ENCODE measurements at regions of chr20 and their contacts with region 1.

Region 1: DNA sequence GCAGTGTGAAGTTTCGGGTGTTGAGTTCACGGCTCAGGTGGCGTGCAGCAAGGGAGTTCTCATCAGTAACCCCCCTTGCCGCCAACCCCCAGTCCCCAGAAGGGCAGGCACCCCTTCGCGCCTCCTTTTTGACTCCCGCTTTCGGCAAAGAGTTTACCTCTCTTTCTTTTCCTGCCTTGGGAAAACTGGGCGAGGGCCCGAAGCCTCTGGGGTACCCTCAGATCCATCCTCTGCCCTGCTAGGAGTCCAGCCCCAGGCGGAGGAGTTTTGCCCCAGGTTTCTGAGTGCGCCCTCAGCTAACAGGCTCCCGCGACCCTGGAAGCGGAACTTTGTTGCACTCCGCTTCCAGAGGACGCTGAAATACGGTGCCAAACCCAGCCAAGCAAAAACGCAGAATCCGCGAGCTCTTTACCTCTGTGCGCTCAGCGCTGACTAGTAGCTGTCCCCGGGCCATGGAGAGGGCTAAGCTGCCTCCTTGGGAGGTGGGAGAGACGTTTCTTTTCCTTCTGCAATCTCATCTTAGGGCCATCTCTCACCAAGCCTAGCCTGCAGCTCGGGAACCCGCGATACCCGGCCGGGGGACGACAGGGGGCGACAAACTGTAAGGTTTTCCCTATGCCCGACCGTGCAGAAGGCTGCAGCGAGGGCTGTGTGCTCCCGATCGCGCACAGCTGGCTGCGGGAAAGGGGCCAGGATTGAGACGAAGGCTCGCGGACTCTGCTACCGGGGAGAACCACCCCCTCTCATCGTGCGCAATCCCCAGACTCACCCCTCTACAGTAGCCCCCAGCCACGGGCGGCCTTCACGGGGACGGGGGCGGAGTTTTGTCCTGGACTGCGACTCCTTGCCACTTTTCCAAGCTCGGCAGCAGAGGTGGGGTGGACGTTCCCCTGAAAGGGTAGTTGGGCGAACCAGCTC is 2.7 kb upstream of the PAX1 start:
- DNase-seq: peak in 1 of 2 experiments; percentile 63
- H3K4me3 ChIP-seq: no peak overlapping the region
- H3K4me3 Mint-ChIP-seq: peak overlapping the region; percentile 5
- H3K27ac Mint-ChIP-seq: no peak overlapping the region
- H3K4me1 ChIP-seq: no peaks in the 10 kb centered on the region
- H3K4me1 Mint-ChIP-seq: no peaks in the 10 kb centered on the region
- H3K27me3 ChIP-seq: no peaks in the 10 kb centered on the region
- H3K27me3 Mint-ChIP-seq: peaks cover 21% of the 10 kb centered on the region
- CTCF ChIP-seq: peak in 1 of 2 experiments; percentile 33

Region 2: DNA sequence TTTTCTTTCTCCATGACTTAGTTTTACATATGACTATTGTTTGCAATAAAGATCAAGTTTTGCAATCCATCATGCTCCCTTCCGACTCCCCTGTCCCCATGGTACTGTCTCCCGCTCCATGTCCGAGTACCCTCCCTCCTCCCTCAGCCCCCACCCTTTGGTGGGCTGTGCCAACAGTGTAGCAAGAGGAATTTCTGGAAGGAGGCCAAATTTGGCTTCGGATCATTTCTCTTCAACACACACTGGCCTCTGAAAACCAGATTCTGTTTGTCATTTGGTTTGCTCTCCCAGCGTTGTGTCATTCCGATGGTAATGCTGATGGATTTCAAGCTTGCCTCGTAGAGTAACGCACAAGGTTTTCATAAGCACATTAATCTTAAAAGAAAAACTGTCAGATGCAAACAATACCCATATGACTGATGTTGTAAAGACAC is 20.3 kb before region 1 on chr20:
- CTCF ChIA-PET with region 1: no interaction called
- POLR2A ChIA-PET with region 1: no interaction called
- intact Hi-C with region 1: loop called (anchors 1 kb)
- DNase-seq: no peak
- H3K4me3 ChIP-seq: no peak overlapping the region
- H3K4me3 Mint-ChIP-seq: no peak overlapping the region
- H3K27ac Mint-ChIP-seq: no peak overlapping the region
- H3K4me1 ChIP-seq: no peaks in the 10 kb centered on the region
- H3K4me1 Mint-ChIP-seq: no peaks in the 10 kb centered on the region
- H3K27me3 ChIP-seq: no peaks in the 10 kb centered on the region; the same call in 1 of the 2 replicates
- H3K27me3 Mint-ChIP-seq: peaks cover 12% of the 10 kb centered on the region
- CTCF ChIP-seq: no peak

Region 3: GRCh38 chr20:22106308-22106938 is 403.6 kb after region 1 on chr20:
- CTCF ChIA-PET with region 1: no interaction called
- POLR2A ChIA-PET with region 1: no interaction called
- intact Hi-C with region 1: loop called (anchors 5 kb)
- DNase-seq: peak in 1 of 2 experiments; percentile 39
- H3K4me3 ChIP-seq: no peak overlapping the region
- H3K4me3 Mint-ChIP-seq: no peak overlapping the region
- H3K27ac Mint-ChIP-seq: no peak overlapping the region
- H3K4me1 ChIP-seq: no peaks in the 10 kb centered on the region
- H3K4me1 Mint-ChIP-seq: no peaks in the 10 kb centered on the region
- H3K27me3 ChIP-seq: no peaks in the 10 kb centered on the region
- H3K27me3 Mint-ChIP-seq: peaks cover 27% of the 10 kb centered on the region
- CTCF ChIP-seq: peak; percentile 55 to 71

Measured in Caco-2 (cell line).